ENCODE measurements at regions of chr19 and their contacts with region 1.

Region 1: GRCh38 chr19:12793290-12794199 is 2.3 kb downstream of the JUNB start:
- DNase-seq: peak; percentile 95 to 98 (median 97)
- ATAC-seq: peak; percentile 47
- H3K4me3 ChIP-seq: peak overlapping the region; percentile 92 to 98
- H3K27ac ChIP-seq: peak overlapping the region; percentile 99 to 100
- H3K4me1 ChIP-seq: peaks cover 27 to 45% of the 10 kb centered on the region in 2 donors
- H3K27me3 ChIP-seq: no peaks in the 10 kb centered on the region
- CTCF ChIP-seq: peak in 1 of 2 donors; percentile 20

Region 2: DNA sequence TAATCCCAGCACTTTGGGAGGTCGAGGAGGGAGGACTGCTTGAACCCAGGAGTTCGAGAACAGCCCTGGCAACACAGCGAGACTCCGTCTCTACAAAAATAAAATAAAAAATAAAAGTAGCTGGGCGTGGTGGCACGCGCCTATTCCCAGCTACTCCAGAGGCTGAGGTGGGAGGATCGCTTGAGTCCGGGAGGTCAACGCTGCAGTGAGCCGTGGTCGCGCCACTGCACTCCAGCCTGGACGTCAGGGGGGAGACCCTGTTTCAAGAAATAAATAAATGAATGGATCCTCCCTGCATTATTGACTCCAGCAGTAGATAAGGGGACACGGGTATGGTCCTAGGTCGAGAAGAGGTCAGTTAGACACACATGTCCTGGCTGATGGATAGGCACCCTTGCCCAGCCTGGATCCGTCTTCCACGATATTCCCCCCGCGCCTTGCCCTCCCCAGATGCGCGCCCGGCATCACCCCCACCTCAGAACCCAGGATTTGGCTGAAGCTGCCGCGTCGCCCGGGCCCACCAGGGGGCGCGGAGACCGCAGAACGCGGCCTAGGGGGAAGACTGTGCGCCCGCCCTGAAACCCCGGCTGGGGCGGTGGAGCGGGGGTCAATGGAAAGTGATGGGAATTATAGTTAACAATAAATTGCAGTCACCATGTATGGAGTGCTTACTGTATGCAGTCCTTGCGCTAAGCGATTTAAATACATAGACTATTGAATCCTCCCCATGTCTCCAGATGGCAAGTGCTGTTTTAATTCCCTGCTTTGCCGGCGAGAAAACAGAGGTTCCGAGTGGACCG is 16.1 kb before region 1 on chr19:
- intact Hi-C with region 1: loop called in 1 of 2 experiments (anchors 2 kb)
- DNase-seq: peak; percentile 56 to 97 (median 86)
- ATAC-seq: peak; percentile 60
- H3K4me3 ChIP-seq: peak overlapping the region; percentile 56 to 59
- H3K27ac ChIP-seq: peak overlapping the region; percentile 92 to 95
- H3K4me1 ChIP-seq: peaks cover 10 to 66% of the 10 kb centered on the region in 2 donors
- H3K27me3 ChIP-seq: no peaks in the 10 kb centered on the region
- CTCF ChIP-seq: peak; percentile 96 to 97